ENCODE measurements at regions of chr1 and their contacts with region 1.

Region 1: GRCh38 chr1:168535536-168535935 is 8.3 kb downstream of the XCL2 start:
- DNase-seq: no peak
- ATAC-seq: peak; percentile 94
- H3K4me3 ChIP-seq: no peak overlapping the region
- H3K27ac ChIP-seq: no peak overlapping the region
- H3K4me1 ChIP-seq: no peaks in the 10 kb centered on the region
- H3K27me3 ChIP-seq: no peaks in the 10 kb centered on the region
- CTCF ChIP-seq: no peak
- EP300 ChIP-seq: no peak
- POLR2A ChIP-seq: no peak
- RAD21 ChIP-seq: no peak

Region 2: GRCh38 chr1:168509875-168510791 is 25.4 kb before region 1 on chr1:
- CTCF ChIA-PET with region 1: interaction called, 4 read pairs
- POLR2A ChIA-PET with region 1: interaction called, 4 read pairs
- RAD21 ChIA-PET with region 1: interaction called, 30 read pairs
- SMC1A ChIA-PET with region 1: interaction called, 27 read pairs
- in situ Hi-C with region 1: no loop called
- intact Hi-C with region 1: no loop called
- DNase-seq: peak; percentile 88
- ATAC-seq: peak; percentile 90
- H3K4me3 ChIP-seq: no peak overlapping the region
- H3K27ac ChIP-seq: peak overlapping the region; percentile 61
- H3K4me1 ChIP-seq: peaks cover 16% of the 10 kb centered on the region
- H3K27me3 ChIP-seq: no peaks in the 10 kb centered on the region
- CTCF ChIP-seq: no peak
- EP300 ChIP-seq: peak; percentile 12 to 64; a peak in 3 of 4 replicates
- POLR2A ChIP-seq: no peak
- RAD21 ChIP-seq: no peak; the same call in 1 of the 2 replicates

Region 3: DNA sequence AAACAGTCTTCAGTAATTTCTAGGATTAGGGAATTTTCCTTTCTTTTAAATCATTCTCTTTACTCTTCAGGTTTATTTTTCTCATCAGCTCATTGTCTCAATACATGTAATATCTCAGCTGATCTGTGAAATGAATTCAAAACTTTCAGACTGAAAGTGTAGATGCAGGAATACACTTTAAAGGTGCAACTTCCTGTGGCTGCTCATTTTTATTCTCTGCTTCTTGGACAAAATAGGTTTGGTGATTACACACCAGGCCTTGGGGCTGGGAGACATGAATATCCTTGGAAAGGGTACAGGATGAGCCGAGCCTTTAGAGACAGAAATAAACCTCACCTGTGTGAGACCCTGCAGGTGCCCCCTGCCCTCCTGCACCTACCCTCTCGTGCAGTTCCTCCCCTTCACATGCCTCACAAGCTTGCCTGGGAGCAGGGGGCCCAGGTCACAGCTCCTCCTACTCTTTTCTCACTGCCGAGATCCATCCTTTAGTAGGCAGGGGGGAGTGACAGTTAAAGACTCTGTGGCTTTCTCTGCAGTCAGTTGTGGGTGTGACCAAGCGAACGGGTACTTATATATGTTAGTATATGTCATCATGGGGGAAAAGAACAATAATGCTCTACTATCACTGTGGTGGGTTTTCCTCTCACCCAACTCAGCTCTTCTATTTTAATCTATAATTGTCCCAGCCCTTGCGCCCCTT is 15.3 kb before region 1 on chr1:
- CTCF ChIA-PET with region 1: interaction called, 12 read pairs
- POLR2A ChIA-PET with region 1: interaction called, 8 read pairs
- RAD21 ChIA-PET with region 1: interaction called, 19 read pairs
- SMC1A ChIA-PET with region 1: interaction called, 48 read pairs
- in situ Hi-C with region 1: no loop called
- intact Hi-C with region 1: no loop called
- DNase-seq: no peak
- ATAC-seq: peak; percentile 95
- H3K4me3 ChIP-seq: no peak overlapping the region
- H3K27ac ChIP-seq: no peak overlapping the region
- H3K4me1 ChIP-seq: peaks cover 10% of the 10 kb centered on the region
- H3K27me3 ChIP-seq: no peaks in the 10 kb centered on the region; a peak in 1 of 4 replicates
- CTCF ChIP-seq: no peak
- EP300 ChIP-seq: peak; percentile 46 to 74; a peak in 2 of 4 replicates
- POLR2A ChIP-seq: no peak
- RAD21 ChIP-seq: no peak

Region 4: GRCh38 chr1:168525231-168525630 is 10.3 kb before region 1 on chr1:
- CTCF ChIA-PET with region 1: interaction called, 12 read pairs
- POLR2A ChIA-PET with region 1: interaction called, 8 read pairs
- RAD21 ChIA-PET with region 1: interaction called, 19 read pairs
- SMC1A ChIA-PET with region 1: interaction called, 48 read pairs
- in situ Hi-C with region 1: no loop called
- intact Hi-C with region 1: no loop called
- DNase-seq: no peak
- ATAC-seq: no peak
- H3K4me3 ChIP-seq: no peak overlapping the region
- H3K27ac ChIP-seq: no peak overlapping the region
- H3K4me1 ChIP-seq: peaks cover 7% of the 10 kb centered on the region
- H3K27me3 ChIP-seq: no peaks in the 10 kb centered on the region; a peak in 1 of 4 replicates
- CTCF ChIP-seq: no peak
- EP300 ChIP-seq: no peak
- POLR2A ChIP-seq: no peak
- RAD21 ChIP-seq: no peak

Region 5: GRCh38 chr1:168560370-168560769 is 24.8 kb after region 1 on chr1:
- CTCF ChIA-PET with region 1: interaction called, 8 read pairs
- POLR2A ChIA-PET with region 1: interaction called, 29 read pairs
- RAD21 ChIA-PET with region 1: interaction called, 61 read pairs
- SMC1A ChIA-PET with region 1: interaction called, 74 read pairs
- in situ Hi-C with region 1: no loop called
- intact Hi-C with region 1: no loop called
- DNase-seq: no peak
- ATAC-seq: no peak
- H3K4me3 ChIP-seq: no peak overlapping the region
- H3K27ac ChIP-seq: no peak overlapping the region
- H3K4me1 ChIP-seq: no peaks in the 10 kb centered on the region
- H3K27me3 ChIP-seq: no peaks in the 10 kb centered on the region
- CTCF ChIP-seq: no peak
- EP300 ChIP-seq: no peak
- POLR2A ChIP-seq: no peak
- RAD21 ChIP-seq: no peak